Right lobe of liver (tissue), 6 donors: ENCODE measurements at regions of chr3 and their contacts with region 1.

Region 1: DNA sequence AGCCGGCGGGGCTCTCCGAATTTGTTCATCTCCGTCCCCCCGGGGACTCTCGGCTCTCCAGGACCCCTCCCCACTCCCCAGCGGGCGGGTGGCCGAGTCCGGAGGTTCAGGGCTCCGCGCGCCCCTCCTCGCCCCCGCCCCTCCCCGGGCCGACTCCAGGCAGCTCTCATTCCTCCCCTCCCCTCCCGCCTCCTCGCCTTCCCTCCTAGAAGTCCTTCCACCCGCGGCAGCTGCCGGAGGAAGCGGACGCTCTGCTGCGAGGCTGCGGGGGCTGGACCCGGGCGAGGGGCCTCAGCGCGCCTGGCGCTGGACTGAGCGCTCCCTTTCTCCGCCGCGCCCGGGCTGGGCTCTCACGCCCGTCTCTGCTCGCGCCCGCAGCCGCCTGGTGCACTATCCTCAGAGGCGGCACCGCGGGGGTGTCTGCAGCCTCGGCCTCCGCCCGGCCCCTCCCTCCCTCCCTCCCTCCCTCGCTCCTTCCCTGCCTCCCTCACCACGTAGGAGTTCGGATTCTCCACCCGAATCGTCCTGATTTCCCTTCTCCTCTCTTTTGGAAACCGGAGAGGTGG is at the start of gene ROBO2:
- DNase-seq: peak; percentile 34 to 52 (median 35)
- ATAC-seq: peak; percentile 46 to 64 (median 56)
- H3K4me3 ChIP-seq: peak within 1 kb of the TSS; percentile 27 to 45 (median 30)
- H3K27ac ChIP-seq: no peak within 1 kb of the TSS
- H3K4me1 ChIP-seq: peaks cover 0 to 18% (median 0%) of the 10 kb centered on the region in 4 donors
- H3K27me3 ChIP-seq: peaks cover 0 to 12% of the 10 kb centered on the region in 2 donors
- CTCF ChIP-seq: no peak
- POLR2A ChIP-seq: no peak
- total RNA-seq, gene ROBO2: 0.07 to 1.7 (median 0.67) TPM

Region 2: GRCh38 chr3:77254967-77255831 is 215.5 kb after region 1 on chr3:
- intact Hi-C with region 1: loop called in 1 of 2 experiments (anchors 10 kb)
- DNase-seq: peak in 1 of 3 donors; percentile 47
- ATAC-seq: peak; percentile 95 to 99 (median 99)
- H3K4me3 ChIP-seq: no peak overlapping the region
- H3K27ac ChIP-seq: no peak overlapping the region
- H3K4me1 ChIP-seq: no peaks in the 10 kb centered on the region
- H3K27me3 ChIP-seq: no peaks in the 10 kb centered on the region
- CTCF ChIP-seq: peak; percentile 71 to 80 (median 75)
- POLR2A ChIP-seq: no peak